CD8-positive, alpha-beta T cell (primary cell): ENCODE measurements at regions of chr20 and their contacts with region 1.

Region 1: DNA sequence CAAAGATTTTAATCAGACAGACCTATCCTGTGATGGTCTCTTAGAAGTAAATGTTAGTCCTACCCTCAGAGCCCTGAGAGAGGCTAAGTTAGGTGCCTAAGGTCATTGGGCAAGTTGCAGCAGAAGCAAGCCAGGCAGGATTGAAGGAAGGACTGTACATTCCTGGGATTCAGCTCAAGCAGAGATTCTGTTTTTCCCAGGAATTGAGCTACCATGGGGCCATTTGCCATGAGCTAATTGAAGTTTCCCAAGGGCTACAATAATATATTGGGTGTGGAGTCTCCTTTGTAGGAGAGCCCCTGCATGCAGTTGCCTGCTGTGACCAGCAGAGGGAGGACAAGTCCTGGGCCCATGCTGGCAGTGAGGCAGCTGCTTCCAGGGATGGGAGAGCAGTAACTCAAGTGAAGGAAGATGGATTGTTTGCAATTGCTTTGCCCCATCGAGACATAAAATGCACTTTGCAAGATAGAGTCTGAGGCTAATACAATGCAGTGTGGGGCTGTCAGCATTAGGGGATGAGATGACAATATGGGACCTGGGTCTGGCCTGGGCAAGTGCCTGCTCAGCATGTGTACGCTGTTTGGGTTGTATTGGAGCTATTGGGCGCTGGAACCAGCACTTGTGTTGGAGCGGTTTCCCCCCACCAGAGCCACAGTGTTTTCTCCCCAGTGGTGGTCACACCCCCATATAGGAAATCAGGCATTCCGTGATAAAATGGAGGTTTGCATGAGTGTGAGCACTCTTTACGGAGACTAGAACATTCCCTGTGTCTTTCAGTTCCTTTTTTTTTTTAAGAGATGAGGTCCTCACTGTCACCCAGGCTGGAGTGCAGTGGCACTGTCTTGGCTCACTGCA is 27.9 kb downstream of the DNMT3B start:
- DNase-seq: peak; percentile 48 to 83 (median 74)
- ATAC-seq: peak; percentile 77
- H3K4me3 ChIP-seq: no peak overlapping the region
- H3K4me3 Mint-ChIP-seq: no peak overlapping the region
- H3K27ac ChIP-seq: no peak overlapping the region
- H3K27ac Mint-ChIP-seq: no peak overlapping the region
- H3K4me1 ChIP-seq: peaks cover 34% of the 10 kb centered on the region
- H3K4me1 Mint-ChIP-seq: peaks cover 40% of the 10 kb centered on the region
- H3K27me3 ChIP-seq: no peaks in the 10 kb centered on the region
- H3K27me3 Mint-ChIP-seq: no peaks in the 10 kb centered on the region
- CTCF ChIP-seq: peak; percentile 99

Region 2: GRCh38 chr20:32762149-32762753 is 27.9 kb before region 1 on chr20 and contains the start of gene DNMT3B:
- CTCF ChIA-PET with region 1: no interaction called
- POLR2A ChIA-PET with region 1: no interaction called
- intact Hi-C with region 1: no loop called
- DNase-seq: peak; percentile 47 to 79 (median 73)
- ATAC-seq: peak; percentile 89
- H3K4me3 ChIP-seq: peak within 1 kb of the TSS; percentile 62 to 65
- H3K4me3 Mint-ChIP-seq: peak within 1 kb of the TSS; percentile 87
- H3K27ac ChIP-seq: no peak within 1 kb of the TSS
- H3K27ac Mint-ChIP-seq: no peak within 1 kb of the TSS
- H3K4me1 ChIP-seq: peaks cover 14% of the 10 kb centered on the region
- H3K4me1 Mint-ChIP-seq: peaks cover 16% of the 10 kb centered on the region
- H3K27me3 ChIP-seq: no peaks in the 10 kb centered on the region
- H3K27me3 Mint-ChIP-seq: no peaks in the 10 kb centered on the region
- CTCF ChIP-seq: no peak
- total RNA-seq, gene DNMT3B: 0.30 to 0.36 TPM

Region 3: DNA sequence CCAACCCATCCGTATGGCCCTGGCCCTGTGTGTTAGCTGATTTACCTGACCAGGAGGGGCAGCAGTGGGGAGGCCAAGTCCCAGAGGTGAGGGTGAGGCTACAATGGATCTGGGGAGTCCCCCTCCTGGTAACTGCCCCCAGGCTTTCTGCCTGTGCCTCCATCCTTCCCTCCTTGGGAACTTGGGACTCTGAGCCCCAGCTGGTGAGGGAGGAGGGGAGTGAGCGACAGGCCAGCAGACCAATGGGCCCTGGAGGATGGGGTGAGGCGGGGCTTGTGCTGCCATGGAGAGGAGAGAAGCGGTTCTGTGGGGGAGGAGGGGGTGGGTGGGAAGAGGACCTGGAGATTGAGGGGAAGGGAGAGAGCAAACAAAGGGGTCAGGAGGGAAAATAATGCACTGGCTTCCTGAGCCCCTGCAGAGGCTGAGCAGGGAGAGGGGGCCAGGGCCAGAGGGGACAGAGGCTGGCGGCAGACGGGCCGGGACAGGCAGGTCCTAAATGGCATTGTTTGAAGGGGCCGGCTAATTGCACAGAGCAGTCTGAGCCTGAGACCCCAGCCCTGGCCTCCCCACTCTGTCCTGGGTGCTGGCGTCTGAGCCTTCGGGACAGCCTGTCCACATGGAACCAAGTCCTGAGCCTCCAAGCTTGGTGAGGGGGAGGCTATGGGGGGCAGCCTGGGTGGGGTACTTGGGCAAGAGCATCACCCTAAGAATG is 10.5 kb before region 1 on chr20:
- CTCF ChIA-PET with region 1: interaction called, 40 read pairs
- POLR2A ChIA-PET with region 1: interaction called, 3 read pairs
- intact Hi-C with region 1: no loop called
- DNase-seq: no peak
- ATAC-seq: no peak
- H3K4me3 ChIP-seq: no peak overlapping the region
- H3K4me3 Mint-ChIP-seq: no peak overlapping the region
- H3K27ac ChIP-seq: no peak overlapping the region
- H3K27ac Mint-ChIP-seq: no peak overlapping the region
- H3K4me1 ChIP-seq: no peaks in the 10 kb centered on the region
- H3K4me1 Mint-ChIP-seq: peaks cover 16% of the 10 kb centered on the region
- H3K27me3 ChIP-seq: no peaks in the 10 kb centered on the region
- H3K27me3 Mint-ChIP-seq: no peaks in the 10 kb centered on the region
- CTCF ChIP-seq: no peak

Region 4: DNA sequence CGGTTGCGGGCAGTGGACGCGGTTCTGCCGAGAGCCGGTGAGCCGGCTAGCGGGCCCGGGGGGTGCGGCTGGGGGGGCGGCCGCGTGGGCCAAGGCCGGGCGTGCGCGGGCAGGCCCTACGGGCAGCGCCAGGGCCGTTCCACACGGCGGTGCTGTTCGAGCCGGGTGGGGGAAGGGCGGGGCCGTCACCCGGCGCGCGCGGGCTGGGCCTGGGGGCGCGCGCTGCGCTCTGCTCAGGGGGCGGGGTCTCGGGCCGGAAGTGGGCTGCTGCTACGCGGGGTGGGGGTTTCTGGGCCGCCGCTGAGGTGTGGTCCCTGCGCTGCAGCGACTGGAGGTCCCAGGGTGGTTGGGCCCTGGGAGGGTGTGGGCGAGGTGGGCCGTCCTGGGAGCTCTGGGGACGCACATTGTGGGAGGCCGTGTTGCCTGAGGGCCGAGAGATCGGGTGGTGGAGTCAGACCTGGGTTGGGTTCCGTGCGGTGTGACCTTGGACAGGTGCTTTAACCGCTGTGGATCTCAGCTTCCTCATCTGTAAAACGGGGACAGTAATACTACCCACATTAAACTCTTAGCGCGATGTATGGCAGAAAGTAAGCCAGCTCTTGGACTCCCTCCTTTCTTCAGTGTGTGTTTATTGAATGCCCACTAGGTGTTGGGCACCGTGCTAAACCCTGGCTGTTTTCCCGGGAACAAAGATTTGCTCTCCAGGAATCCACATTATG is 30.0 kb after region 1 on chr20:
- CTCF ChIA-PET with region 1: interaction called, 3 read pairs
- POLR2A ChIA-PET with region 1: interaction called, 3 read pairs
- intact Hi-C with region 1: loop called (anchors 1 to 2 kb)
- DNase-seq: peak in 8 of 9 experiments; percentile 78 to 92 (median 86)
- ATAC-seq: peak; percentile 76
- H3K4me3 ChIP-seq: peak overlapping the region; percentile 71 to 72
- H3K4me3 Mint-ChIP-seq: peak overlapping the region; percentile 97
- H3K27ac ChIP-seq: peak overlapping the region; percentile 88 to 93
- H3K27ac Mint-ChIP-seq: peak overlapping the region; percentile 98
- H3K4me1 ChIP-seq: peaks cover 41% of the 10 kb centered on the region
- H3K4me1 Mint-ChIP-seq: peaks cover 42% of the 10 kb centered on the region
- H3K27me3 ChIP-seq: no peaks in the 10 kb centered on the region
- H3K27me3 Mint-ChIP-seq: no peaks in the 10 kb centered on the region
- CTCF ChIP-seq: no peak

Region 5: GRCh38 chr20:32858701-32859372 is 68.7 kb after region 1 on chr20 and contains the start of gene EFCAB8:
- CTCF ChIA-PET with region 1: interaction called, 3 read pairs
- POLR2A ChIA-PET with region 1: no interaction called
- intact Hi-C with region 1: loop called in 1 of 2 experiments (anchors 5 kb)
- DNase-seq: no peak
- ATAC-seq: no peak
- H3K4me3 ChIP-seq: no peak within 1 kb of the TSS
- H3K4me3 Mint-ChIP-seq: no peak within 1 kb of the TSS
- H3K27ac ChIP-seq: peak within 1 kb of the TSS in 1 of 2 experiments; percentile 10
- H3K27ac Mint-ChIP-seq: peak within 1 kb of the TSS; percentile 72
- H3K4me1 ChIP-seq: no peaks in the 10 kb centered on the region
- H3K4me1 Mint-ChIP-seq: peaks cover 26% of the 10 kb centered on the region
- H3K27me3 ChIP-seq: no peaks in the 10 kb centered on the region
- H3K27me3 Mint-ChIP-seq: no peaks in the 10 kb centered on the region
- CTCF ChIP-seq: no peak
- total RNA-seq, gene EFCAB8: 0.75 to 0.92 TPM

Region 6: GRCh38 chr20:32945710-32946221 is 155.6 kb after region 1 on chr20:
- CTCF ChIA-PET with region 1: interaction called, 11 read pairs
- POLR2A ChIA-PET with region 1: no interaction called
- intact Hi-C with region 1: no loop called
- DNase-seq: peak in 3 of 9 experiments; percentile 20 to 66 (median 55)
- ATAC-seq: peak; percentile 96
- H3K4me3 ChIP-seq: no peak overlapping the region
- H3K4me3 Mint-ChIP-seq: peak overlapping the region; percentile 59
- H3K27ac ChIP-seq: peak overlapping the region in 1 of 2 experiments; percentile 10
- H3K27ac Mint-ChIP-seq: peak overlapping the region; percentile 90
- H3K4me1 ChIP-seq: peaks cover 19% of the 10 kb centered on the region
- H3K4me1 Mint-ChIP-seq: peaks cover 37% of the 10 kb centered on the region
- H3K27me3 ChIP-seq: no peaks in the 10 kb centered on the region
- H3K27me3 Mint-ChIP-seq: no peaks in the 10 kb centered on the region
- CTCF ChIP-seq: peak; percentile 79

Region 7: DNA sequence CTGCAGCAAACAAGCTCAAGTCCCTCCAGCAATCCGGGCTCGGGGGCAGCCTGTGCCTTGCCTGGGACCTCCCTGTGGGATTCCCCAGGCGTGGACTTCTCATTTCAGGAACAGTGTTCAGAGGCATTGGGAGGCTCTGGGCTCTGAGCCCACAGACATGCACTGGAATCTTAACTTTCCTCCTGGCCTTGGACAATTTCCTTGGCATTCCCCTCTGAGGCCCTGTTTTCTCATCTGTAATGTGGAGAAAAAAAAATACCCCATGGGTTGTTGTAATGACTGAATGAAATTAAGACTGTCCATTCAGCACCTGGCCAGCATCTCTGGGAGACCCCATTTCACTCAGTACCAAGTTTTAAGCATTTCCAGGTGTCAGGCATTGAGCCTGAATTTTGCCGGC is 306.9 kb after region 1 on chr20:
- CTCF ChIA-PET with region 1: interaction called, 4 read pairs
- POLR2A ChIA-PET with region 1: no interaction called
- intact Hi-C with region 1: loop called in 1 of 2 experiments (anchors 5 kb)
- DNase-seq: no peak
- ATAC-seq: no peak
- H3K4me3 ChIP-seq: no peak overlapping the region
- H3K4me3 Mint-ChIP-seq: no peak overlapping the region
- H3K27ac ChIP-seq: no peak overlapping the region
- H3K27ac Mint-ChIP-seq: no peak overlapping the region
- H3K4me1 ChIP-seq: peaks cover 3% of the 10 kb centered on the region
- H3K4me1 Mint-ChIP-seq: peaks cover 3% of the 10 kb centered on the region
- H3K27me3 ChIP-seq: no peaks in the 10 kb centered on the region
- H3K27me3 Mint-ChIP-seq: no peaks in the 10 kb centered on the region
- CTCF ChIP-seq: no peak